Endothelial cell of umbilical vein (primary cell): ENCODE measurements at regions of chr4 and their contacts with region 1.

Region 1: DNA sequence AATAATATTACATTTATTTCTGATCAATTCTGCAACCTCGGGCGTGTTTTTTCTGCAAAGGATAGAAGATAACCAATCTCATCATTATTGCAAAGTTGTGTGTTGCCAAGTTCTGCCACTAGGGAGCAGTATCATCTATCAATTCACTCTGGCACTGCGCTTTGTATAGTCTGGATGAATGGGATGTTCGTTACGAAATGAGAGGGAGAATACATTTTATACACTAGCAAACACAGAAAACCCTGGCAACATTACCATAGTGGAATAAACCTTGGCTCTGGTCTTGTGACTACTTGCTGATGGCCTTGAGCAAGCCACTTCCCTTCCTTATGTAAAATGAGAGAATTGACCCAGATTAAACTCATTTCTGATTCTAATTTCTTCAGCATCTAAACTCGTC is 97.5 kb upstream of the ZNF518B start:
- DNase-seq: peak; percentile 67
- H3K4me3 ChIP-seq: no peak overlapping the region
- H3K27ac ChIP-seq: no peak overlapping the region
- H3K4me1 ChIP-seq: peaks cover 4% of the 10 kb centered on the region
- H3K27me3 ChIP-seq: peaks cover 9 to 14% of the 10 kb centered on the region in 2 experiments
- CTCF ChIP-seq: peak; percentile 65 to 72
- POLR2A ChIP-seq: no peak

Region 2: DNA sequence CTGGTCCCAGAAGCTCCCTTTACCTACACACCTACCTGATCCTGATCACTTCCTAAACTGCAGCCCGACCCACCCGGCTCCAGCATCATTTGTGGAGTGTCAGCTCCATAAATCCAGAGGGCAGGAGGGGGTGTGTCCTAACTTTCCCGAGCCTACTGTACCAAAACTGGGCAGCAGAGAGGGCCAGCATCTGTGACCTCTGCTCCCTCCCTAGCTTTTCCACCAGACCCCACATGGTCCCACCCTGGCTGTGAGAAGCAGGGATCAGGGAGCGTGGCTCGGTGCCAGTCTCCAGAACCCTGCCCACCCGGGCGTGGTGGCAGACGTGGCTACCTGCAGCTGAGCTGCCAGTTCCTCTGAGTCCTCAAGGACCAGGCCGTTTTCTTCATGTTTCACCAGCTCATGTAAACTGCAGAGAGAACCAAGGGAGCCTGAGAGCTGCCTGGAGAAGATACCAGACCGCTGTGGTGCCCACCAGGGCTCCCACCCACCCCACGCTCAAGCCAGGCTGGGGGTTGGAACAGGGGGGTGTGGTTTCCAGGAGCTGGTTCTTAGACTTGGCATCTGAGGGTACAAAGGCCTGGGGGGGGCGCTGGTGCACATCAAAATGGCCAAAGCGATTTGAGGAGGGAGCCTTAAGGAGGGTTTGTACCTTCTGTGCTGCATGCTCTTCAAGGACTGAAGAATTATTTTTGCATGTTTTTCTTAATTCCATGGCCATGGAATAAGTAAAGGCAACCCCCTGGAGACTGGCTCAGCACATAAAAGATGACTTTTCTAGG is 850.0 kb before region 1 on chr4:
- CTCF ChIA-PET with region 1: interaction called, 3 read pairs
- POLR2A ChIA-PET with region 1: no interaction called
- dilution Hi-C with region 1: no loop called
- intact Hi-C with region 1: loop called (anchors 5 kb)
- DNase-seq: no peak
- H3K4me3 ChIP-seq: no peak overlapping the region
- H3K27ac ChIP-seq: no peak overlapping the region
- H3K4me1 ChIP-seq: no peaks in the 10 kb centered on the region
- H3K27me3 ChIP-seq: no peaks in the 10 kb centered on the region
- CTCF ChIP-seq: no peak
- POLR2A ChIP-seq: no peak

Region 3: DNA sequence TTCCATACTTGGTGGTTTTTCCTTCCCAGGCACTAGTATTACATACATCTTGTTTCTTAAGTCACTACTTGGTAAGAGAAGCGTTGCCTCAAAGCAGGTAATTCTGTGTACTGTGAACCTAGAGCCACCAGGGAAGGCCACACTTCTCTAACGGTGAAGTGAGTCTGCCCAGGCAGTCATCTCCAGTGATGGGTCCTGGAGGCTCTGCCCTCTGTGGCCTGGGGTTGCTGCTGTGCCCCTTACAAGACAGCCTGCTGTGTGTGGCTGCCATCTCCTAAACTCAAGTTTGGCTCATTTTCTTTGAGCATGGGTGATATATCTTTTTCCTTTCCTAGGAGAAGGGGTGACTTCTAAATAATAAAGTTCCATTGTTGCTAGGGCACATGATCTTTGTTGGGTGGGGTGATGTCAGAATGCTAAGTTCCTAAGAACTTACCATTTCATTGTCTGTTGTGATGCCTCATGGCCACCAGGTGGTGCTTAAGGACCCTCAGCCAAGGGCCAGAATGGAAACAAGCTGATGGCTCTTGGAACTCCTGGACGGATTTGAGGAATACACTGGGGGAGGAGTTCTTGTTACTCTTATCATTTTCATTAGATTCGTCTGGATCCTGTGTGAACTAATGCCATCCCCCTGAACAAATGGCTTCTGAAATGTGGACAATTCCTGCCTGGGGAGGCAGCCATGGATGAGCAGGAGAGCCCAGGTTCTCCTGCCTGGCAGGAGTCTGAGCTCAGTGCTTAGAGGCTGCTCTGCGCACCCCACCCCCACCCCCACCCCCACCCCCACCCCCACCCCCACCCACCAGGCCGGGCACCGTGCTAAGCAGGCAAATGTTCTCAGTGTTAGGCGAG is 397.0 kb before region 1 on chr4:
- CTCF ChIA-PET with region 1: interaction called, 136 read pairs
- POLR2A ChIA-PET with region 1: no interaction called
- dilution Hi-C with region 1: loop called (anchors 25 kb)
- intact Hi-C with region 1: loop called (anchors 1 kb)
- DNase-seq: peak; percentile 74
- H3K4me3 ChIP-seq: no peak overlapping the region
- H3K27ac ChIP-seq: no peak overlapping the region
- H3K4me1 ChIP-seq: no peaks in the 10 kb centered on the region
- H3K27me3 ChIP-seq: peaks cover 2 to 7% of the 10 kb centered on the region in 2 experiments
- CTCF ChIP-seq: peak; percentile 79 to 82
- POLR2A ChIP-seq: no peak

Region 4: DNA sequence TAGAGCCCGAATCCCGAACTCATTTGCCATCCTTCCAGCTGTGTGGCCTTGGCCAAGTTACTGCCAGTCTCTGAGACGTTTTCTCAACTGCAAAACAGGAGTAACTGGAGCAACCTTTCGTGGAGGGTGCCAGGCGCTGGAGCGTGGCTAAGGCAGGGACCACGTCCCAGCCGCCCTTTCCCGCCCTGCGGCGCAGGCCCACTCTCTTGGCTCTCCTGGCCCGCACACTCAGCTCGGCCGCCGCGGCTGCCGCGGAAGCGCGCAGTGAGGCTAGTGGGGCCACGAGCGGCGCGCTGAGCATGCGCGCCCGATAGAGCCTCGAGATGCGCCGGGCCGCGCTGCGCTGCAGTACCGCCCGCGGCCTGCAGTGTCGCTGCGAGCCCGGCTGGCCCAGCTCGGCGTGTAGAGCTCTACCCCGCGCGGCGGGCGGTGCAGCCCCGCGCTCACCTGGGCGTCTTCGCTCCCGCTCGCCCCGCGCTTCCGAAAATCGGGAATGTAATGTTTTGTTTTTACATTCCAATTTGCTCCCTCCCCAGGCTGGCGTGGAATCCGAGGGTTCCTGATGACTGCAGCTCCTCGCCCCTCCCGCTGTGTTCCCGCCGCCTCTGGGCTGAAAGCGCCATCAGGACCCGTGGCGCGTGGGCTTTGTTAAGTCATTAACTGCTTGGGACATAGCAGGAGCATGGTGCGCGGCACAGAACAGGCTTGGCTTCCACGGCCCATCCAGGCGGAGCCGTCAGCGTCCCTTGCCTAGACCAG is 93.4 kb before region 1 on chr4:
- CTCF ChIA-PET with region 1: interaction called, 19 read pairs
- POLR2A ChIA-PET with region 1: no interaction called
- dilution Hi-C with region 1: no loop called
- intact Hi-C with region 1: loop called (anchors 1 kb)
- DNase-seq: peak; percentile 67
- H3K4me3 ChIP-seq: peak overlapping the region in 2 of 3 experiments; percentile 21 to 27
- H3K27ac ChIP-seq: no peak overlapping the region
- H3K4me1 ChIP-seq: peaks cover 17% of the 10 kb centered on the region
- H3K27me3 ChIP-seq: peaks cover 13 to 20% of the 10 kb centered on the region in 2 experiments
- CTCF ChIP-seq: peak; percentile 92 to 93
- POLR2A ChIP-seq: no peak

Region 5: DNA sequence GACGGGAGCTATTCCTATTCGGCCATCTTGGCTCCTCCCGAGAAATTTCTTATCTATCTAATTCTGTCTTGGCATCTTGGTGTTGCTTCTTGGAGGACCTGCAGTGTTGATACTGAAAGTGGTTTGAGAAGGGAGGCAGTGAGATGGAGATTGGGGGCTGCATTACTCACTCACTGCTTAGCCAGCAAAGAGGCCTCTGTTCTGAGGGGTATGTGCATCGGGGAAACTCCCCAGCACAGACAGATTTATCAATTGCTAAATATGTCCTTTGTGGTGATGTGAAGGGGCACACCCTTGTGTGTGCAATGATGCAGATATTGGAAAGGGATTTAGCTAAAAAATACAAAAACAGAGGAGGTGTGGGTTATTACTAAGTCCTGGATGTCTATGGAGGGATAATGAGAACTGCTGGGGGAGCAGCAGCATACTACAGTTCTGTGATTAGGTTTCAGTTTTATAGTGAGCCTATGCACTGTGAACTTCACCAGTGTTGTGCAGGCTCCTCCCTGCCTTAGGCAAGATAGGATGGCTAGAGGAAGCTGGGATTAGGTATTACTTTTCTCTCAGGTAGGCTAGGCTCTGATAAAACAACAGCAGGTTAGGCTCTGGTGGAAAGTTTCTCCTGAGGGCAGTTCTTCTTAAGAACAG is 595.0 kb after region 1 on chr4:
- CTCF ChIA-PET with region 1: no interaction called
- POLR2A ChIA-PET with region 1: no interaction called
- dilution Hi-C with region 1: no loop called
- intact Hi-C with region 1: loop called (anchors 10 kb)
- DNase-seq: no peak
- H3K4me3 ChIP-seq: no peak overlapping the region
- H3K27ac ChIP-seq: no peak overlapping the region
- H3K4me1 ChIP-seq: no peaks in the 10 kb centered on the region
- H3K27me3 ChIP-seq: no peaks in the 10 kb centered on the region
- CTCF ChIP-seq: no peak
- POLR2A ChIP-seq: no peak

Region 6: DNA sequence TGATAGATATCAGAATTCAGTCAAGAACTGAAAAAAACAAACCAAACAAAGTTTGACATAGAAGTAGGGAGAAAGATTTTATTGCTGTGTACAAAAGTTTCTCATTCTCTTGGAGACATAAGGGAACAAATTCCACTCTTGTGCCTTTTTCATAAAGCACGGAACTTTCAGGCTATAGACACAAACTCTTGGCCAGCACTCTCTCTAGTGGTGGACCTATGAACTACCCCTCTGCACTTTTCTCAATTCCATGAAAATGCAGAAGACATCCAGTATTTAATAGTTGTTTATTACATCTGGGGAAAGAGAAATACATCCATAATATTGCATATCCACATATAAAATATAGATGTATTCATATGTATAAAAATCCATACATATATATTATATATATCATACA is 1165.6 kb after region 1 on chr4:
- CTCF ChIA-PET with region 1: no interaction called
- POLR2A ChIA-PET with region 1: no interaction called
- dilution Hi-C with region 1: no loop called
- intact Hi-C with region 1: loop called (anchors 1 kb)
- DNase-seq: peak; percentile 62
- H3K4me3 ChIP-seq: no peak overlapping the region
- H3K27ac ChIP-seq: no peak overlapping the region
- H3K4me1 ChIP-seq: peaks cover 9% of the 10 kb centered on the region
- H3K27me3 ChIP-seq: no peaks in the 10 kb centered on the region
- CTCF ChIP-seq: peak; percentile 62 to 77
- POLR2A ChIP-seq: no peak